ENCODE measurements at regions of chrX and their contacts with region 1.

Region 1: DNA sequence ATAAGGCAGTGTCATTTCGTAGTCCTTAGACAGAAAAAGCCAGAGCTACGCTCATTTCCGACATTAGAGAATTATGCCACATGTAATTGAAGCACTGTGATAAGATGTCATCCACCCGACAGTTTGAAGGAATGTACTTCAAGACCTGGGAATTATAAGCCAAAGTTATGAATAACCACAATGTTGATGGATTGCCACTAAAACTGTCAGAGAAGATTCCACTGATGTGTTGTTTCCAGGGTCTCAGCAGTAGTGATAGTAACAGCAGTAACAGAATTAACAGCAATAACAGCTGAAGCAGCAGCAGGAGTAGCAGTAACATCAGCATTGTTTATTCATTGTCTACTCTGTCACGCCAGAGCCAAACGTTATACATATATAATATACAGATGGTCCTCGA is 24.7 kb downstream of the RAB33A start:
- H3K4me3 ChIP-seq: no peak overlapping the region
- H3K27ac ChIP-seq: no peak overlapping the region
- H3K4me1 ChIP-seq: no peaks in the 10 kb centered on the region
- CTCF ChIP-seq: no peak

Region 2: GRCh38 chrX:130147631-130148030 is 48.8 kb before region 1 on chrX:
- CTCF ChIA-PET with region 1: interaction called, 10 read pairs
- POLR2A ChIA-PET with region 1: no interaction called
- H3K4me3 ChIP-seq: no peak overlapping the region
- H3K27ac ChIP-seq: no peak overlapping the region
- H3K4me1 ChIP-seq: no peaks in the 10 kb centered on the region
- CTCF ChIP-seq: no peak

Measured in HEK293 (cell line).